SK-N-SH (cell line): ENCODE measurements at regions of chr16 and their contacts with region 1.

Region 1: DNA sequence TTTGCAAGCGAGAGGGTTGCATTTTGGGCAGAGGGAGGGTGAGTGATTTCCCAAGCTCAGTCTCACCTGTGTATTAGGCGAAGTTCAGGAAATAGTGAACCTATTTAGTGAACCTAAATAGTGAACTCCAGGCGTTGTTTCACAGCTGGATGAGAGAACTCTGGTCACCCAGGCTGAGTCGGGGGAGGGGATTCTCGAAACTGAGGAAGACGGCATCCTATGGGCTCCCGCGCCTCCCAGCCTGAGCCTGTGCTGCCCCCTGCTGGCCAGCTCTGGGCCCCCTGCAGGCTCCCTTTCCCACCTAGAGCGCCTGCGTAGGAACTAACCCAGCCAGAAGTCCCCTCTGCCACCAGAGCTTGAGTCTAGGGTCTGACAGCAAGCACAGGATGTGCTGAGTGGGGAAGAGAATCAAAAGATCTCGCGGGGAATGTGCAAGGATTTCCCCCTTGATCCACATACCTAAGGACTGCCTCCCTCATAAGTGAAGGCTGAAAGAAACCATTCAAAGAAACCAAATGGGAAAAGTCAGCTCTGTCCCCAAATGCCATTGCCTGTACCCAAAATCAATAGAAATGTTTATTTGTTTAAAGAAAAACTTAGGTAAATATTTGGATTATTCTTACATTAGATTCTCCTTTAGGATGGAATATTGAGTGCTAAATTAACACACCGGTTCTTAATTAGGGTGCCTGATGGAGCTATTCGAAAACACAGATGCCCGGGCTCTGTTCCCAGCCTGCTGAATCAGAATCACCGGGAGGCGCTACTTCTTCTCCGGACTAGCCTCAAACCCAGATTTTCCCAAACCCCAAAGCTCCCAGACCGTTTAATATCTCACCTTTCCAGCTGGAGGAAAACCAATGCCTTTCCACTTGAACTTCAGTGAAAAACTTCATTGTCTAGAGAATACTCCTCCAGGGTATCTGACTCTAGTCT is 14.8 kb upstream of the MARVELD3 start:
- DNase-seq: peak; percentile 91
- H3K4me3 ChIP-seq: peak overlapping the region in 1 of 2 experiments; percentile 50; a peak in 3 of 4 replicates
- H3K27ac ChIP-seq: no peak overlapping the region
- H3K4me1 ChIP-seq: peaks cover 0 to 2% of the 10 kb centered on the region in 2 experiments; a peak in 2 of 4 replicates
- H3K27me3 ChIP-seq: peaks cover 9% of the 10 kb centered on the region; the same call in 1 of the 2 replicates
- CTCF ChIP-seq: peak; percentile 79
- EP300 ChIP-seq: no peak
- RAD21 ChIP-seq: peak; percentile 82

Region 2: DNA sequence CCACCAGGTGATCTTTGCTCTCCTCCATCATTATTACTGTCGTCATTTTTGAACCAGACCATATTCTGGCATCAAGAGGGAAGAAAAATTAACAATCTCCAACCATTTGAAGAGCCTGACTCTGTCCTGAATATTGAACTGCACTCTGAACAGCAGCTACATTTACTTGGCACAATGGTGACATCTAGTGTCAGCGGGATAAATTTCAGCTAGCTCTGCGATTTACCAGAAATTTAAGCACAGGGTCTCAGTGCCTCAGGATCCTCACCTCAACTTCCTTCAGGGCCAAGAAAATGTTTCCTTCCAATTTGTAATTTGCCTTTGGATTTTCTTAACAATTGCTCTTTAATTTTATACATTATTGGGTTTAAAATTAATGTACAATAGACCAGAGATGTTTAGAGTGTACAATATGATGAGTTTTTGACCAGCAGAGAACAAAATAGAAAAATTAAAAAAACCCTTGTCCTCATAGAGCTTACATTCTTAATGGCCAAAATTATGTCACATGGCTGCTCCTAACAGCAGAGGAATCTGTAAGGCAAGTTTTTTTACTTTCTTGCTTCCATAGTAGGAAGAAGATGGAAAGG is 111.3 kb before region 1 on chr16:
- CTCF ChIA-PET with region 1: interaction called, 23 read pairs
- POLR2A ChIA-PET with region 1: no interaction called
- DNase-seq: peak; percentile 66
- H3K4me3 ChIP-seq: no peak overlapping the region
- H3K27ac ChIP-seq: no peak overlapping the region
- H3K4me1 ChIP-seq: no peaks in the 10 kb centered on the region
- H3K27me3 ChIP-seq: no peaks in the 10 kb centered on the region; the same call in 1 of the 2 replicates
- CTCF ChIP-seq: peak; percentile 77
- EP300 ChIP-seq: no peak
- RAD21 ChIP-seq: peak; percentile 91

Region 3: GRCh38 chr16:71564155-71564967 is 46.8 kb before region 1 on chr16:
- CTCF ChIA-PET with region 1: interaction called, 48 read pairs
- POLR2A ChIA-PET with region 1: interaction called, 4 read pairs
- DNase-seq: no peak
- H3K4me3 ChIP-seq: peak overlapping the region; percentile 71 to 78
- H3K27ac ChIP-seq: peak overlapping the region; percentile 51 to 56; a peak in 3 of 4 replicates
- H3K4me1 ChIP-seq: peaks cover 0 to 6% of the 10 kb centered on the region in 2 experiments; a peak in 2 of 4 replicates
- H3K27me3 ChIP-seq: no peaks in the 10 kb centered on the region; the same call in 1 of the 2 replicates
- CTCF ChIP-seq: no peak
- EP300 ChIP-seq: no peak
- RAD21 ChIP-seq: no peak

Region 4: GRCh38 chr16:71585318-71585703 is 25.9 kb before region 1 on chr16:
- CTCF ChIA-PET with region 1: interaction called, 23 read pairs
- POLR2A ChIA-PET with region 1: no interaction called
- DNase-seq: no peak
- H3K4me3 ChIP-seq: no peak overlapping the region
- H3K27ac ChIP-seq: no peak overlapping the region
- H3K4me1 ChIP-seq: no peaks in the 10 kb centered on the region
- H3K27me3 ChIP-seq: no peaks in the 10 kb centered on the region; the same call in 1 of the 2 replicates
- CTCF ChIP-seq: no peak
- EP300 ChIP-seq: no peak
- RAD21 ChIP-seq: no peak

Region 5: GRCh38 chr16:71628810-71629209 is 17.6 kb after region 1 on chr16:
- CTCF ChIA-PET with region 1: interaction called, 17 read pairs
- POLR2A ChIA-PET with region 1: no interaction called
- DNase-seq: no peak
- H3K4me3 ChIP-seq: no peak overlapping the region
- H3K27ac ChIP-seq: no peak overlapping the region
- H3K4me1 ChIP-seq: no peaks in the 10 kb centered on the region; a peak in 1 of 4 replicates
- H3K27me3 ChIP-seq: peaks cover 6% of the 10 kb centered on the region
- CTCF ChIP-seq: no peak
- EP300 ChIP-seq: no peak
- RAD21 ChIP-seq: no peak